ENCODE measurements at regions of chr16 and their contacts with region 1.

Region 1: GRCh38 chr16:68116256-68116867 is 31.2 kb downstream of the NFATC3 start:
- DNase-seq: peak; percentile 34
- CTCF ChIP-seq: no peak

Region 2: GRCh38 chr16:68085259-68086071 is 30.9 kb before region 1 on chr16 and contains the start of gene NFATC3:
- CTCF ChIA-PET with region 1: interaction called, 17 read pairs
- POLR2A ChIA-PET with region 1: no interaction called
- DNase-seq: peak; percentile 97
- CTCF ChIP-seq: no peak

Region 3: GRCh38 chr16:68093816-68094613 is 22.3 kb before region 1 on chr16:
- CTCF ChIA-PET with region 1: interaction called, 11 read pairs
- POLR2A ChIA-PET with region 1: no interaction called
- DNase-seq: no peak
- CTCF ChIP-seq: peak; percentile 42

Region 4: DNA sequence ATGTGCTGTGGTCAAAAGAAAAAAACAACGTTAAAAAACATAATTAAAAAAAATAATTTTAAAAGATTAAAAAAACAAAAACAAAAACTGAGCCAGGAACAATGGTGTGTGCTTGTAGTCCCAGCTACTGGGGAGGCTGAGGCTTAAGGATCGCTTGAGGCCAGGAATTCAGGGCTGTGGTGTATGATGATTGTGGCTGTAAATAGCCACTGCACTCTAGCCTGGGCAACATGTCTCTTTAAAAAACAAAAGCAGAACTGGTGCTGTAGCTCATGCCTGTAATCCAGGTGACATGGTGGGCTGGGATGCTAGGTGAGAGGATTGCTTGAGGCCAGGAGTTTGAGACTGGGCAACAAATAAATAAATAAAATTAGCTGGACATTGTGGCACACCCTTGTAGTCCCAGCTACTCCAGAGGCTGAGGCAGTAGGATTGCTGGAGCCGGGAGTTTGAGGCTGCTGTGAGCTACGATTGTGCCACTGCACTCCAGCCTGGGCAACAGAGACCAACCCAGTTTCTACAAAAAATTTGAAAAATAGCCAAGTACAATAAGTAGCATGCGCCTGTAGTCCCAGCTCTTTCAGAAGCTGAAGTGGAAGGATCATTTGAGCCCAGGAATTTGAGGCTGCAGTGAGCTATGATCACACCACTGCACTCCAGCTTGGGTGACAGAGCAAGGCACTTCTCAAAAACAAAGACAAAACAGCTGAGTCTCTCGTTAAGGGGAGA is 12.4 kb after region 1 on chr16:
- CTCF ChIA-PET with region 1: interaction called, 15 read pairs
- POLR2A ChIA-PET with region 1: interaction called, 6 read pairs
- DNase-seq: no peak
- CTCF ChIP-seq: no peak

Region 5: GRCh38 chr16:68179196-68179795 is 62.9 kb after region 1 on chr16:
- CTCF ChIA-PET with region 1: no interaction called
- POLR2A ChIA-PET with region 1: no interaction called
- DNase-seq: no peak
- CTCF ChIP-seq: no peak